Left colon (tissue), 2 donors: ENCODE measurements at regions of chr19 and their contacts with region 1.

Region 1: DNA sequence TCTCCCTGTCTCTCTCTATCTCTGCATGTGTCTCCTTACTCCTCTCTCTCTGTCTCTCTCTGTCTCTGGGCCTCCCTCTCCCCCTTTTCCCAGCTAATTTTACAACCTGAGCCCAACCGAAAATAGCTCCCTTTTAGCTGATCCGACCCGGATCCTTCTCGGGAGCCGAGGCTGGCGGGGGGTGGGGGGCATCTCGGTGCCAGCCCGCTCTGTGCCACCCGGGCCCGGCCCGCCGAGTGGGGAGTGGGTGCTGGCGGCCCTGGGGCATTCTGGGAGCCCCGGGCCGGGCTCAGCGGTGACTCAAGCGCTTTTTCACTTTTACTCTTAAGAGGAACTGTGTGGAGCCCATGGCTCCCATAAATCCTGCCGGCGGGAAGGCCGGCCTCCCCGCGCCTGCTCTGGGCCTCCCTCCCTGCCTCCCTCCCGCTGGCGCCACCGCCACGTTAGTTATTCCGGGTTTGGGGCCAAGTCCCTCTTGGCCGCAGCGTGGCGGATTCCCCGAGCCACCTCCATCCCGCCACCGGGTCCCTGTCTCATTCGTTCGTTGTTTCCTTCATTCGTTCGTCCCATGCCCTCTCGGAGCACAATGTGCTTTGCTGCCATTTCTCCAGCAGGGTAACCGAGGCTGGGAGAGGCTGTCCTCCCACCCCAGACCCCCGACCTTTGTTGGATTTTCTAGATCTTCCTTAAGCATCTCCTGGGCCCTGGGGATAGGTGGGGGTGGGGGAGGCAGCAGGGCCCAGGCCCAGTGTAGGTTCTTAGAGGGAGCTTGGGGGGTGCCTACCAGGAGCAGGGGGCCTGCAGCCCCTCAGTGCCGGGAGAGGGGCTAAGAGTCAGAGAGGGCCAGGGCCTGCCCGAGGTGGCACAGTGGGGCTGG is 3.2 kb downstream of the NFIC start:
- DNase-seq: peak in 1 of 2 donors; percentile 45
- ATAC-seq: no peak

Region 2: GRCh38 chr19:3284759-3285646 is 84.6 kb before region 1 on chr19:
- intact Hi-C with region 1: no loop called
- DNase-seq: peak; percentile 95 to 98
- ATAC-seq: peak; percentile 85

Region 3: DNA sequence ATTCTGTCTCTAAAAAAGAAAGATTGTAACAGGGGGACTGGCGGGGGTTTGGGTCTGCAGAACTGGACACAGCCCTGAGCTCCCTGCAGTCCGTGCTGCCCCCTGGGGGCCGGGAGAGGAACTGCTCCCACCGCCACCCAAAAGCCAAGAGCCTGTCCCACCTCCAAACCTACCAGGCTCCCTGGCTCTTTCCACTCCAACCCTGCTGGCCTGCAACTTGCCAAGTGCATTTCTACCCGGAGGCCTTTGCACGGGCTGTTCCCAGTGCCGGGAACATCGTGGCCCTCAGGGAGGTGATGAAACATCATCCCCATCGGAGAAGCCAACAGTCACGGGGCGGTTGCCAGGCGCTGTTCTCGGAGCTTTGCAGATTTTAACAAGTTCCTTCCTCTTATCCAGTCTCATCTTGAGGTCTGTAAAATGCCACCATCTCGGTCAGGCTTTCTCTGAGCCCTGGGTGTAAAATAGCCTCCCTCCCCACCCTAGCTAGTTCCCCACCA is 60.1 kb after region 1 on chr19:
- intact Hi-C with region 1: loop called in 1 of 2 experiments (anchors 10 kb)
- DNase-seq: peak; percentile 78 to 91
- ATAC-seq: peak; percentile 75